ENCODE measurements at regions of chr20 and their contacts with region 1.

Region 1: GRCh38 chr20:51953731-51954340 is 151.5 kb upstream of the SALL4 start:
- DNase-seq: no peak
- H3K4me3 ChIP-seq: no peak overlapping the region
- H3K27ac ChIP-seq: no peak overlapping the region
- H3K4me1 ChIP-seq: no peaks in the 10 kb centered on the region
- H3K27me3 ChIP-seq: no peaks in the 10 kb centered on the region
- CTCF ChIP-seq: no peak

Region 2: DNA sequence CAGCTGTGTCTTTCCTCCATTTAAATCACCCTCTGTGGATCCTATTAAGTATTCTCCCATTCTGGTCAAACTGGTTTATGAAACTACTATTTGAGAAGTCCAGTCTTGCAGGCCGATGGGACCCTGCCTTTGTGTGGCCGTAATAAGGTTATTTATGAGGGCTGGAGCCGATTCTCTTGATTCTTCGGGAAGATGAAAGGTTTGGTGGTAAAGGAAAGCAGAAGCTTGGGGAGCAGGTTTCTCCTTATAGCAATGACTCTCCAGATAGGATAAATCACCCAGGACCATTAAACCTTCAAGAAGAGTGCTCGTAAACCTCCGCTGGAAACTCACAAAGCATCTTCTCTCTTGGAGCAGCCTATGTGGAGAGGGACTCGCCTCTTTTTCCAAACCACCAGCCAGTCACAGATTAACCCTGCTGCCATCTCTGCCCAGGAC is 82.0 kb before region 1 on chr20:
- CTCF ChIA-PET with region 1: no interaction called
- dilution Hi-C with region 1: no loop called
- in situ Hi-C with region 1: no loop called
- intact Hi-C with region 1: no loop called
- DNase-seq: no peak
- H3K4me3 ChIP-seq: no peak overlapping the region
- H3K27ac ChIP-seq: no peak overlapping the region
- H3K4me1 ChIP-seq: no peaks in the 10 kb centered on the region
- H3K27me3 ChIP-seq: no peaks in the 10 kb centered on the region
- CTCF ChIP-seq: no peak

Region 3: DNA sequence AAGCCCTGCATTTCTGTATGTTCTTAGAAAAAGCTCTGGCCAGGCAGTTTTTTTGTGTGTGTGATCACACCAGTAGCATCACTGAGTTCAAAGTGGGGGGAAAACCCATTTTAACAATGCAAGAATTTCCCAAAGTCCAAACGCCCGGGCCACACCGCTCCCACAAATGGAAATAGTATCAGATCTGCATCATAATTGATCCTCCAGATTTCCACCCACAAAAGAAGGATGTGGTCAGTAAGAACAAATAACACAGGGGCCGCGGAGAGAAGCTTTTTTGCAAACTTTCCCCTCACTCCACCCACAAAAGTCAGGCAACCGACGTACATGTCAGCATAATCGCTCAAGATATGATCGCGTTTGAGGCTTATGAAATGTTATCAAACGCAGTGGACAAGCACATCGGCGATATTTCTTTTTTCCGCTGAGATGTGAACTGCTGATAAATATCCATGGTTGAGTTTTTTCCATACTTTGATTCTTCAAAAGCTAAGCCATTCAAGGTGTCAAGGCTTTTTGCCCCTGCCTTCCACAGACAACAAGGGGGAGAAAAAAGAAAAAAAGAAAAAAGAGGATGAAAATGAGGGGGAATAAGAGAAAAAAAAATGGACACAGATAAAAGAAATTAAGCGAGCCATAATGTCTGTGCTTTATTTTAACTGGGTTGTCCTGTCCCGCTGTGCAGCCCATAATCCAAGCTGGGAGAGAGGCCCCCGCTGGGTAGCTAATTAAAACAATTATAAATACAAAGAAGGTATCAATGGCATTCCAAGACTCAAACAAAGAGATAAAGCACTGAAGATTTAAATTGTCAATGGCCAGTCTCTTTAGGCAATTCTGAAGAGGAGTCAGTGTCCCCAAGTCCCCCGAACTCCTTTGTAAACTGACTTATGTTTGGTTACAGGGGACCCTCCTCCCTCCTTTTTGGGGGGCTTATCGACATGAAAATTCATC is 94.3 kb after region 1 on chr20:
- CTCF ChIA-PET with region 1: no interaction called
- dilution Hi-C with region 1: loop called (anchors 5 kb)
- in situ Hi-C with region 1: no loop called
- intact Hi-C with region 1: no loop called
- DNase-seq: peak; percentile 33
- H3K4me3 ChIP-seq: no peak overlapping the region
- H3K27ac ChIP-seq: no peak overlapping the region
- H3K4me1 ChIP-seq: no peaks in the 10 kb centered on the region
- H3K27me3 ChIP-seq: no peaks in the 10 kb centered on the region
- CTCF ChIP-seq: no peak

Measured in mammary epithelial cell (primary cell).